Esophagus muscularis mucosa (tissue), 4 donors: ENCODE measurements at regions of chr5 and their contacts with region 1.

Region 1: GRCh38 chr5:151651997-151652645 is 34.6 kb downstream of the SPARC start:
- DNase-seq: no peak
- H3K4me3 ChIP-seq: no peak overlapping the region
- H3K27ac ChIP-seq: no peak overlapping the region
- H3K4me1 ChIP-seq: no peaks in the 10 kb centered on the region
- H3K27me3 ChIP-seq: no peaks in the 10 kb centered on the region
- CTCF ChIP-seq: peak; percentile 78 to 88 (median 80)
- EP300 ChIP-seq: no peak
- POLR2A ChIP-seq: no peak

Region 2: DNA sequence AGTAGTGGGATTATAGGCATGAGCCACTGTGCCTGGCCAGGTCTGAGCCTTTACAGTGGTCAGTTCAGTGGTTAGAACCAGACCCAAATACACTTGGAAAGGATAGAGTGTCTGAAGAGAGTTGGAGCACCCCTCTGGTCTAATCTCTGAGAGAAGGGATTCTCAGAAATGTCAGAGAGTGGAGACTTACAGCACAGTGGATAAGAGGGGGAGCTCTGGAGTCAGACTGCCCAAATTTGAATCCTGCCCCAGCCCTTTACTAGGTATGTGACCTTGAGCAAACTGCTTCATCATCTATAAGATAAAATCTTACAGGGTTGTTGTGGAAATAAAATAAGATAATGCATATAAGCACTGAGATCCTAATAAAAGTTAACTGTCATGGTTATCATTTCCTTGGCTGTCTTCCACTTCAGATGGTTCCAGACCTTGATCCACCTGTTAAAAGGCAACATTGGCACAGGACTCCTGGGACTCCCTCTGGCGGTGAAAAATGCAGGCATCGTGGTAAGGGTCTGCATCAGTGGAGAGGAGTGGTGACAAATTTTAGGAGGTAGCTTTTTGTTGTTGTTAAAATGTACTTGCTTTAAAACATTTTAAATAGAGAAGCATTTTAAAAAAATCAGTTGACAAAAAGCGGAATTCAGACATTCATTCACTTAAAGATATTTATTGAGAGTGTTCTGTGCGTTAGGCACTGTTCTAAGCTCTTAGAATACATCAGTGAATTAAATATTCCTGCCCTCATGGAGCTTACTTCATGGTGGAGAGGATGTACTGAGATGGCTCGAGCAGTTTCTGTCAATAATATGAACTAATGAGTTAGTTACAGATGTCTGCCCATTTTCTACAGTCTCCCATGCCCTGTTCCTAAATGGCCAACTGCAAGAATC is 188.7 kb before region 1 on chr5:
- intact Hi-C with region 1: no loop called
- DNase-seq: no peak
- H3K4me3 ChIP-seq: no peak overlapping the region
- H3K27ac ChIP-seq: no peak overlapping the region
- H3K4me1 ChIP-seq: no peaks in the 10 kb centered on the region
- H3K27me3 ChIP-seq: no peaks in the 10 kb centered on the region
- CTCF ChIP-seq: no peak
- EP300 ChIP-seq: no peak
- POLR2A ChIP-seq: no peak

Region 3: DNA sequence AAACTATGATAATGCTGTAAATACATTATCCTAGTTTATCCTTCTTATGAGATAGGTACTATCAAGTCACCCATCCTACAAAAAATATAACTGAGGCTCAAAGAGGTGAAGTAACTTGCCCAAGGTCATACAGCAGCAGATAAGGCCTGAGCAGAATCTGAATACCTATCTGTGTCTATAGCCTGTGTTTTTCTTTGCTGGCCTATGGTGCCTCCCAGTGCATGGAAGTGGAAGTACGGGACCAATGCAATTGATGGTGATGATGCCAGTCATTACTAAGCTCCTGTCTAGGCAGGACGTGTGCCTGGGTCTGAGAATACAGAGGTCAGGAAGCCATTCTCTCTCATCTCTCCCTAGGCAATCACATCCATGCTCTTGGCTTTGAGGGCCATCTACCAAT is 128.8 kb before region 1 on chr5:
- intact Hi-C with region 1: loop called (anchors 5 kb)
- DNase-seq: no peak
- H3K4me3 ChIP-seq: no peak overlapping the region
- H3K27ac ChIP-seq: no peak overlapping the region
- H3K4me1 ChIP-seq: no peaks in the 10 kb centered on the region
- H3K27me3 ChIP-seq: no peaks in the 10 kb centered on the region
- CTCF ChIP-seq: peak in 1 of 3 experiments; percentile 40
- EP300 ChIP-seq: no peak
- POLR2A ChIP-seq: no peak

Region 4: DNA sequence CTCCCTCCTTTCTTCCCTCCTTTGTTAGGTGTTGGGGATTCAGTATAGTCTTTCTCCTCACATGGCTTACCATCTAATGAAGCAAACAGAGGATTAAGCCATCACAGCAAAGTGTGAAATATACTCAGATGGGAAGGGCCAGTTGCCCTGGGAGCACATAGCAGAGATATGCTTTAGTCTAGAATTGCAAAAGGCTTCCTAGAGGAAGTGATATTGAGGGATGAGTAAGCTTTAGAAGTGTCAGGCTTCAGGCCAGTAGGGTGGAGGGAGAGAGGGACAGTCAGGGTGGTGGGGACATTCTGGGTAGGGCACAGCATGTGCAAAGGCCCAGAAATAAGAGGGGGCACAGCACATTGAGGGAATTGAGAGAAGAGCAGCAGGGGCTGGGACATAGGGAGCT is 318.8 kb after region 1 on chr5:
- intact Hi-C with region 1: no loop called
- DNase-seq: no peak
- H3K4me3 ChIP-seq: no peak overlapping the region
- H3K27ac ChIP-seq: no peak overlapping the region
- H3K4me1 ChIP-seq: no peaks in the 10 kb centered on the region
- H3K27me3 ChIP-seq: no peaks in the 10 kb centered on the region
- CTCF ChIP-seq: no peak
- EP300 ChIP-seq: no peak
- POLR2A ChIP-seq: no peak